AG04449 (cell line): ENCODE measurements at regions of chr9 and their contacts with region 1.

Region 1: GRCh38 chr9:126482361-126483044 is 131.2 kb upstream of the LMX1B start:
- DNase-seq: no peak
- H3K4me3 ChIP-seq: no peak overlapping the region; the same call in 1 of the 2 replicates
- CTCF ChIP-seq: no peak

Region 2: DNA sequence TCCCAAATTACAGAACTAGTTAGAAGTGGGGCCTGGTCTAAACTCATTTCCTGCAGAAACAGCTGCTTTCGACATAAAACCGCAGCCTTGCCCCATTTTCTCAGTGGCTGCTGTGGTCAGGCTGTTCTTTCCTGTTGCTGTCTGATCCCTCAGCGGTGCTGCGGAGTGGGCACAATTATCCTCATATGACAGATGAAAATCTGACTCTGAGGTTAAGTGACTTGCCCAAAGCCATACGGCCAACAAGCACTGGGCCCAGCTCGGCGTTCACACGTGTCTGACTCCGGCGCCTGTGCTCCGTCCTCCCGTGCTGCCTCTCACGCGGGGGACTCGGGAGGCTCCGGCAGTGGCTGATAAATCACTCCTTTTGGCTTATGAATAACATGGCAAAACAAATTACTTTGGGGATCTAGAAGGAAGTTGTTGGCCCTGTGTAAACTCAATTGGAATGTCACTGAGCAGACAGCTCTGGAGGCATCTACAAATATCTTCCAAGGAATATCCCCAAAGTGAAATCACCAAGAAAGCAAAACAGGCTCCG is 11.3 kb before region 1 on chr9:
- CTCF ChIA-PET with region 1: interaction called, 13 read pairs
- POLR2A ChIA-PET with region 1: interaction called, 3 read pairs
- DNase-seq: peak; percentile 53
- H3K4me3 ChIP-seq: peak overlapping the region; percentile 19
- CTCF ChIP-seq: no peak

Region 3: DNA sequence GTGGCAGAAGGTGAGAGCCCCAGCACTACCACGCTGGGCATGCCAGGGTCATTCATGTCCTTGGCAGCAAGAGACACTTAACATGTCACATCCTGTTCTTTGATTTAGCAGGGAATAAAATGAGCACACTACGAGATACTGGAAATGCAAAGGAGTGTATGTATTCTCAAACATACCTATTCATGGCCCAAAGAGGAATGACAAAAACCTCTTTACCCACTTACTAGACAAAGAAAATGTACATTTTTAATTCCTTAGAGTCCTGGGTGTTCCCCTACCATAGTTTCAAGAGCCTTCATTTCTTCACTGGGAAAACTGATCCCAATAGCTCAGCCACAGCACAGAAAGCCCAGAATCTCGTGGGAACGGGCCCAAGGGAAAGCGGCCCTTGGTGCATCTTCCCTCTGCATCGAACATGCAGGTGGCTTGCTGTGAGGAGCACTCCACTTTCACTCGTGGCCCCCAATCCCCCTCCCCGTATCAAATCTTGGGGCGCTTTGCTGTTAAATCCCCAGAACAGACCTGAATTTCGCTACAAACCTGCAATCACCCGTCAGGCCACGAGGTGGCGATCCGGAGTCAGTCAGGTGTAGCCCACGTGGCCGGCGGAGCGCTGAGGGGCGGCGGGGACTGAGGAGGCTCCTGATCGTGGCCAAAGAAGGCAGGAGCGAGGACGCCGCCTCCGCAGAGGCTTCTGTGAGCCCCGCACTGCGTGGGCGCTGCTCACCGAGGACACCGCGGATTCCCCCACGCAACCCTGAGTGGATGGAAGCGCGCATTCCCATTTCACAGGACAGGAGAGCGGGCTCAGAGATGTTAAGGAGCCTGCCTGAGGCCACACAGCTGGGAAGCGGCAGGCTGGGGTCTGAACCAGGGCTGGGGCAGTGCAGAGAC is 222.6 kb after region 1 on chr9:
- CTCF ChIA-PET with region 1: no interaction called
- POLR2A ChIA-PET with region 1: no interaction called
- DNase-seq: no peak
- H3K4me3 ChIP-seq: peak overlapping the region; percentile 37
- CTCF ChIP-seq: peak; percentile 92